ENCODE measurements at regions of chr9 and their contacts with region 1.

Region 1: DNA sequence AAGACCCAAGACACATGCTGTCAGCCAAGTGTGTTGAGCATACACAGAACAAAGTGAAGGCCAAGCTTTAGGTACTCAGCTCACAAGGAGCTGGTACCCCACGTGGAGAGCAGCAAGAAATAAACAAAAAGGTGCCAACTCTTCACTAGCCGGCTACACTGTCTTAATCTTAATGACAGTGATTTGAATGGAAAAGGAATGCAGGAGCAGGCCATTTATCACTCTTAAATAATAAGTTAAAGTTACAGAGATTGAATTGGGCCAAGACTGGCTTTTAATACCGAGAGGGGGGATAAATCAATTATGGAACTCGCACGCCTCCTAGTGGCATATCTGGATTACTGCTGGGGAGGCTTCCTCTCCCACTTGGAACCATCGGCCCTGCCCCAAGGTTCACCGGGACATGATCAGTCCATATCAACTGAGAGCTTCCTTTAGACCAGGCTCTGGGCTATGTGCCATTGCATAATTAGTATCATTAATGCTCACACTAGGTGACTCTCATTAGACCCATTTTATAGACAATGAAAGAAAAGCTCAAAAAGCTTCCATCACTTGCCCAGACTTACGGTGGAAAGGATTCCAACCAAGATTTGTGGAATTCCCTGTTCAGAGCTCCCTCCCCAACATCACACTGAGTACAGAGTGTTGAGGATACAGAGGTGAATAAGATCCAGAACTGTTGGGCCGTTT is 94.0 kb downstream of the ACTL7B start:
- ATAC-seq: peak; percentile 35 to 87 (median 66)
- H3K4me3 ChIP-seq: no peak overlapping the region
- H3K27ac ChIP-seq: no peak overlapping the region
- H3K4me1 ChIP-seq: peaks cover 0 to 3% of the 10 kb centered on the region in 2 donors

Region 2: GRCh38 chr9:107465467-107466451 is 1296.0 kb before region 1 on chr9:
- in situ Hi-C with region 1: loop called in 3 of 9 experiments (anchors 25 kb)
- ATAC-seq: peak; percentile 97 to 99 (median 99)
- H3K4me3 ChIP-seq: peak overlapping the region; percentile 49 to 56 (median 53)
- H3K27ac ChIP-seq: no peak overlapping the region
- H3K4me1 ChIP-seq: no peaks in the 10 kb centered on the region

Region 3: DNA sequence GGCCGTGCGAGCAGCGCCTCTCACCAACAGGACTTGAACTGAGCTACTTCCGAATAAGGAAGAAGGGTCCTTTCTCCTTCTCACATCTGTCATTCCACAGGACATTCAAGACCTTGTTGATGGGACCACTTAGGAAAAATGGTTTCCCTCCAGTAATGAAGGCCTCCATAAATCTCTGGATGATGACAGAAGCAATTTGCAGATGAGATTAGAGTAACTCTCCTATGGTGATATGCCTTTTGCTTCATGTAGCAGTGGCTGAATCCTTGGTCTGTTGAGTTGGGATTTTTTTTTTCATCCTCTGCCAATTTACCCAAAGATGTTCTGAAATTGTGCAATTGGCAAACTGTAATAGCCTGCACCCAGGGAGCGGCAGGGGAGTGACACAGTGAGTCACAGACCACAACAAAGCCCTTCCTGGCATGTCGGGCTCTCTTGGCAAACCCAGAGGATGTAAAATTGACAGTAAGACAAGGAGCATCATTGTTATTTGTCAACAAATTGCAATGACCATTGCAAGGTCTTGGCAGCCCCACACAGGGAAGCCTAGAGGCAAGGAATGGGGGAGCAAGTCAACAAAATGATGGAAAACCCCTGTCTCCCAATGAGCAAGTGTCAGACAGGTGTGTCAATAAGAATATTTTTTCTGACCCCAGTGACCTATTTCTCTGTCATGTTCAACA is 181.9 kb before region 1 on chr9:
- in situ Hi-C with region 1: loop called in 1 of 9 experiments (anchors 25 kb)
- ATAC-seq: peak in 6 of 8 experiments; percentile 15 to 96 (median 84)
- H3K4me3 ChIP-seq: no peak overlapping the region
- H3K27ac ChIP-seq: no peak overlapping the region
- H3K4me1 ChIP-seq: no peaks in the 10 kb centered on the region

Region 4: GRCh38 chr9:108634204-108634603 is 127.6 kb before region 1 on chr9:
- in situ Hi-C with region 1: no loop called
- ATAC-seq: peak in 3 of 8 experiments; percentile 69 to 97 (median 92)
- H3K4me3 ChIP-seq: no peak overlapping the region
- H3K27ac ChIP-seq: no peak overlapping the region
- H3K4me1 ChIP-seq: no peaks in the 10 kb centered on the region

Region 5: GRCh38 chr9:108850293-108850897 is 88.6 kb after region 1 on chr9:
- in situ Hi-C with region 1: loop called in 1 of 9 experiments (anchors 25 kb)
- ATAC-seq: peak in 2 of 8 experiments; percentile 31 to 40
- H3K4me3 ChIP-seq: no peak overlapping the region
- H3K27ac ChIP-seq: no peak overlapping the region
- H3K4me1 ChIP-seq: no peaks in the 10 kb centered on the region